Left cardiac atrium (tissue), 4 donors: ENCODE measurements at regions of chrX and their contacts with region 1.

Region 1: DNA sequence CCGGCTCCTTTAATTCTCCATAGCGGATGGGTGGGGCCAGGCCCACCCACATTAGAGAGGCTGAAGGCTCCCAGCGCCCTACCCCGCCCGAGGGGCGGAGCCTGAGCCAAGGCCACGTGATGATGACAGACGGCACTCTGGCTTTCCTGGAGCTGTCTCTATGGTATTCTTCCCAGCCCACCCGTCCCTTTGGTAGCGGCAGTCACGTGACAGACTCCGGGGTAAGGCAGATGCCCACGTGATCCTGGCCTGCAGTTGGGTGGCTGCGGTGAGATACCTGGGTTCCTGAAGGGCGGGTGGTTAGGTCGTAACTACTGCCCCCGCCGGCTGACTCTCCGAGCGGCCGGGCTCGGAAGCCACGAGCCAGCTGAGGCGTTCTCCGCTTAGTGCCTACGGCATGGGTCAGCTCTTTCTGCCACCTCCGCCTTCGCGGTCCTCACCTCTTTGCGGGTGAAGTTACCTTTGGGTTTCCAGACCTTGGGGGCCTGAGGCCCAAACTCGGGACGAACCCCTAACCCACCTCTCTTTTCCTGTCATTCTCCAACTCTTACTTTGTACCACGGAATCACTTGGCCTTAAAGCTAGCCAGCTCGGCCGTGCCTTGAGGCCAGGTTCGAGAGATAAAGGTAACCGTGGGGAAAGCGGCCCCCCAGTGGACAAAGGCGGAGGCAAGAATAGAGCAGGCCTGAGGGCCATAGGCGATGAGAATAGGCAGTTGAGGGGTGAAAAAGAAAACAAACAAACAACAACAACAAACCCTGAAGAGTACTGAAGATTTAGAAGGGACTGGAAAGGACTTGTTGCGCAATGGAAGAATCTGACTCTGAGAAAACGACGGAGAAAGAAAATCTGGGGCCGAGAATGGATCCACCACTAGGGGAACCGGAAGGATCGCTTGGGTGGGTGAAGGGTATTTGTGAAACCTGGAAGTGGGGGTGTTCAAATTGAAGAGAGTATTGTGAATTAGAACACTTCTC is at the start of gene RRAGB:
- DNase-seq: peak; percentile 94
- ATAC-seq: peak; percentile 100
- total RNA-seq, gene RRAGB: 9.5 to 15.8 TPM

Region 2: DNA sequence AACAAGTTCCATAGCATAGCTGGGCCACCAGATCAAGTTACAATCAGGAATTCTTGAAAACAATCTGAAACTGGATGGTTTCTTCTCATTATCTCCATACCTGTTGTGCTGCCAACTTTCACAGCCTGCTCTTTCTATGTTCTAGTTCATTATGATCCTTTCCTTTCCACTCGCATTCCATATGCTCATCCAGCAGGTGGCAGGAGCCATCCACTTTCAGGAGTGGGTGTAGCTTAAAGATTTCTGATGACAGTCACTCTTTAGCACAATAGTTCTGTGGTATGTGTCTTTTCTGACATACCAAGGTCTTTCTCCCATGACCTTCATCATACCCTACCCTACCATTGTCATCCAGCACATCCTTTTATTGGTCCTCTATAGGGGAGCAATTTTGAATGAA is 582.6 kb before region 1 on chrX:
- intact Hi-C with region 1: loop called in 1 of 2 experiments (anchors 10 kb)
- DNase-seq: peak; percentile 33
- ATAC-seq: peak; percentile 64 to 74

Region 3: DNA sequence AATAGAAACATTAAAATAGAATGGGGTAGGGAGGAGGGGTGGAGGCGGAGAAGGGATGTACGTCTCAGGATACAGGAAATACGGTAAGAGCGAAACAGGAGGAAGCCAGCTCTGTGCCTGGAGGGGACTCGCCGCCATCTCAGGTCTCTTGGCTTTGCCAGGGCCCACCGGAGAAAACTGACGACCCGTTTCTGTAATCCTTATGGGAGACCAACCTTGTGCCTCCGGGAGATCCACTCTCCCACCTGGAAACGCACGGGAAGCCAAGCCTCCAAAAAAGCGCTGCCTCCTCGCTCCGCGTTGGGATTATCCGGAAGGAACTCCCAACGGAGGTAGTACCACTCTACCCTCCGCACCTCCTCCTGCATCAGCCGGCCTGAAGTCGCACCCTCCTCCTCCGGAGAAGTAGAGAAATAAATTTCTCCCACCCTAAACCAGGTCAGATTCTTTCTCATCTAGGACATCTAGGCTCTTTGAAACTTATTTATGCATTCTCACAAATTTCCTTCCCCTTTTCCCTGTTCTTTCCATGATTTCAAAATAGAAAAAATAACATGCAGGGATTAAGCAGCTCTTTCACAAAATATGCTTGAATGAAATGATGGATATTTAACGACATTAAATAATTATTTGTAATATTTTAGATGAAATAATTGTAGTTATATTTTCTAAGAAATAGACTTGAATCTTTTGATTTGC is 1011.5 kb after region 1 on chrX and contains the start of gene NBDY:
- intact Hi-C with region 1: loop called in 1 of 2 experiments (anchors 5 kb)
- DNase-seq: peak; percentile 26
- ATAC-seq: peak; percentile 89 to 97
- total RNA-seq, gene NBDY: 27.5 to 32.6 TPM